Vagina (tissue), 2 donors: ENCODE measurements at regions of chr3 and their contacts with region 1.

Region 1: DNA sequence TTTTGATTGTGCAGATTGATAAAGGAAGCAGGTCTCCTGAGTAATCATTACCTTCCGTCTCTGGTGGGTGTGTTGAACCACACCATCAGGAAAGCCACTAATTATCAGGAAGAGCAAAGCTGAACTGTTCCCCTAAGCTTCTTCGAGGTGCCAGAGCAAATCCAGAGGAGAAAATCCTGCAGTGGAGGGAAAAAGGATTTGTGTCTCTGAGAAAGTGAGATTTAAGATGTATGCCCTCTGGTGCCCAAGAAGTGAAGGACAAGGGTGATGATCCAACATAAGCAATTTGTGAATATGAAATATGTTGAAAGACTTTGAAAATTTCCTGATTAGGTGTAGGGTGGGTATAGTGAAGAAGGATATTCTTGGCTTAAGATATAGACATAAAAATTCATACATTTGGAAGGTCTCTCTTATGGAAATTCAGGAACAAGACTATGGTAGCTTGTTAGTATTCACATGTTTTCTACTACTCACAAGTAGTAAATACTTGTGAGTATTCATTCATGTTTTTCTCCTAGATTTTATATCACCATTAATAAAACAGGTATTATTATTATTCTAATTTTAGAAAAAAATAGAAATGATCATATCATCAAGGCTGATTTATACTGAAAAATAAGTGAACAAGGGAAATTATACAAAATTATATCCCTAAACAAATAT is 34.8 kb downstream of the COMMD2 start:
- DNase-seq: no peak
- H3K4me3 ChIP-seq: no peak overlapping the region
- H3K27ac ChIP-seq: no peak overlapping the region
- H3K4me1 ChIP-seq: no peaks in the 10 kb centered on the region
- H3K27me3 ChIP-seq: no peaks in the 10 kb centered on the region
- CTCF ChIP-seq: peak; percentile 69 to 77 (median 73)
- POLR2A ChIP-seq: no peak

Region 2: DNA sequence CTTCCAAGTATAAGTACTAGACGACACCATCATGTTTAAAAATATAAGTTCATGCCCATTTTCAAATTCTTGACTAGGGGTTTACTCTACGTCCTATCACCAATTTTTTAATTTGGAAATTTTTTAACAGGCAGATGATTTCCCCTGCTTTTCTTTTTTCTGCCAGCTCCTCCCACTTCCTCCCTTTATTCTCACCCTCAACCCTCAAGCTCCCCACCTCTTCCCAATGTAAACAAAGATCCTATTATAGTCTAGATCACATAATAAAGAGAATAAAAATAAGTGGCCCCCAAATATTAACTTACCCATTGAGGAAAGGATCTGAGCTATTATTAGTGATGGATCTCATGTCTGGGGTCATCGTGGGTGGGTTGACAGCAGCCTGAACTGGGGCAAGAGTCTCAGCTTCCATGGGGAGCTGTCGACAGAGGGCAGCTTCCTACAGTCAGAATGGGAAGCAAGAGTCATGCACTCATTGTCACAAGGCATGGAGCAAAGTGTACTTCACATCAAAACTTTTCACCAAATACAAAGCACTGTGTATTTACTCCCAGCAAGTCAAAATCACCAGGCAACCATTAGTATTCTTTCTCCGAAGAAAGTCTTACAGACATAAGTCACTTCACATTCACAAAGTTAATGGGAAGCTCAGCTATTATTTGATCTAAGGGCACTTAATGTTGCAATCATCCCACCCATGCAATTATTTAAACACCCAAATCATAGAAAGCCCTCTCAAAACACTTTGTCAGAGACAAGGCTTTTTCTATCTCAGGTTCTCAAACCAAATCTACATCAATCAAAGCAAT is 189.8 kb before region 1 on chr3:
- intact Hi-C with region 1: loop called (anchors 5 kb)
- DNase-seq: no peak
- H3K4me3 ChIP-seq: no peak overlapping the region
- H3K27ac ChIP-seq: peak overlapping the region; percentile 61
- H3K4me1 ChIP-seq: peaks cover 17% of the 10 kb centered on the region
- H3K27me3 ChIP-seq: no peaks in the 10 kb centered on the region
- CTCF ChIP-seq: no peak
- POLR2A ChIP-seq: no peak

Region 3: GRCh38 chr3:149638228-149639092 is 79.1 kb before region 1 on chr3:
- intact Hi-C with region 1: no loop called
- DNase-seq: no peak
- H3K4me3 ChIP-seq: peak overlapping the region; percentile 16 to 20
- H3K27ac ChIP-seq: peak overlapping the region; percentile 54
- H3K4me1 ChIP-seq: peaks cover 82% of the 10 kb centered on the region
- H3K27me3 ChIP-seq: no peaks in the 10 kb centered on the region
- CTCF ChIP-seq: no peak
- POLR2A ChIP-seq: no peak

Region 4: DNA sequence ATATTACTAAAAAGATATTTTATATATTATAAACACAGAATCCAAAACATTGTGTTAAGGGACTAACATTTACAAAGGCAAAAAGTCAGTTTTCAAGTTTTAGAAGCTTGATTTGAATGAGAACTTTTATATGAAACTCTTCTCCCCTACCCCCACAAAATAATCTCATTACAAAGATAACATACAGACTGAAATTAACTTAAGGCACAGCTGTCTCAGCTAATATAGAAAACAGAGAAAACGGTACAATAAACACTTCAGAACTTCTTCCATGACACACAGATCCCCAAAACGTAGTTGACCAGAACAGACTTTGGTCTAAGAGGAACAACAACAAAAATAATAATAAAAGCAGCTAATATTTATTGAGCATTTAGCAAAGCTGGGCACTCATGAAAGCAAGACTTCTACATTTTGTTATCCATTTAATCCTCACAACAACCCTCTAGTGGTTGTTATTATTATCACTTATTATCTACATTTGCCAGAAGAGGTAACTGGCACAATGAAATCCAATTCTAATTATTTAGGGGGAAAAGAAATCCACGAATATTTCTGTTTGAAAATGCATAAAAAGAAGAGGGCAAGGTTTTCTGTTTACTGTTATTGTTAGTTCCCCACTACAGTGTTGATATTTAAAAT is 185.1 kb after region 1 on chr3:
- intact Hi-C with region 1: no loop called
- DNase-seq: no peak
- H3K4me3 ChIP-seq: no peak overlapping the region
- H3K27ac ChIP-seq: no peak overlapping the region
- H3K4me1 ChIP-seq: no peaks in the 10 kb centered on the region
- H3K27me3 ChIP-seq: no peaks in the 10 kb centered on the region
- CTCF ChIP-seq: no peak
- POLR2A ChIP-seq: no peak